Dendritic cell treated with granulocyte-macrophage colony-stimulating factor and Interleukin-4, amounts not matched to agents 40 ng/mL and 50 ng/mL, for 4 days (primary cell): ENCODE measurements at regions of chr2 and their contacts with region 1.

Region 1: GRCh38 chr2:197705121-197705911 is at the start of gene MARS2:
- H3K4me3 Mint-ChIP-seq: peak within 1 kb of the TSS; percentile 88
- H3K27ac Mint-ChIP-seq: peak within 1 kb of the TSS; percentile 84
- H3K4me1 Mint-ChIP-seq: peaks cover 40% of the 10 kb centered on the region
- H3K27me3 Mint-ChIP-seq: peaks cover 4% of the 10 kb centered on the region

Region 2: DNA sequence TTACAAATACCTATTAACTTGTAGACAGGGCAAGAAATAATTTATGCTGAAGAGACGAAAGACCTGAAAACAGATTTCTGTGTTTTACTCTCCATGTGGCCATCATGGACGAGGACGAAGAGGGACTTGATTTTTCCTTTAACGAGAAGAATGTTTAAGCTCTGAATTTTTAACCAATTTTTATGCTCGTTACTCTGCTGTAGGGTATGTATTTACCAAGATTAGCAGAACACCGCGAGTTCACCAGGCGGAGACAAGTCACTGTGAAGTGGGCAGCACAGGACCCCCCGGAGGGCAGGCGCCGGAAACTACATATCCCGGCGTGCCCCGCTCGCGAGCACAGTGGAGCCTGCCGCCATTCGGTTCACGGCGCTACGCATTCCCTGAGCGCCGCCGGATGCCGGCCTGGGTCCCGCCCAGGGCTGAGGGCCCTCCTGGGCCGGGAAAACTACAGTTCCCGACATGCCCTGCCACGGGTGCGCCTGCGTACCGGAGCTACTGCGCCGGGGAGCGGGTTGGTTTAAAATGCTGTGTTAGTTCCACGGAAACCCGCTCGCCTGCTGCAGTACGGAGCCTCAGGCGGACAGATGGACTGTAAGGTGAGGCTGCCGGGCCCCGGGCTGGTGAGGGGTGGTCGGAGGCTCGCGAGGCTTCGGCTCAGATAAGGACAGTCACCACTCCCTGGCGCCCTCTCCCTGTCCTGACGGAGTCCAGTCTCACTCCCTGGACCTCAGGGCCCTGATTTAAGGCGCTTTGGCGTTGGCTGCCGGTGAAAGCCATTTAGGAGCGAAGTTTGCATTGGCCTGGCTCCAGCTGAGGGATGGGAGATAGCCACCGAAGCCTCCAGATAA is 1065.9 kb before region 1 on chr2 and contains the start of gene CCDC150:
- intact Hi-C with region 1: loop called (anchors 10 kb)
- H3K4me3 Mint-ChIP-seq: peak within 1 kb of the TSS; percentile 83
- H3K27ac Mint-ChIP-seq: peak within 1 kb of the TSS; percentile 72
- H3K4me1 Mint-ChIP-seq: peaks cover 13% of the 10 kb centered on the region
- H3K27me3 Mint-ChIP-seq: peaks cover 6% of the 10 kb centered on the region

Region 3: GRCh38 chr2:197069958-197070357 is 635.4 kb before region 1 on chr2:
- intact Hi-C with region 1: no loop called
- H3K4me3 Mint-ChIP-seq: no peak overlapping the region
- H3K27ac Mint-ChIP-seq: no peak overlapping the region
- H3K4me1 Mint-ChIP-seq: peaks cover 12% of the 10 kb centered on the region
- H3K27me3 Mint-ChIP-seq: no peaks in the 10 kb centered on the region

Region 4: DNA sequence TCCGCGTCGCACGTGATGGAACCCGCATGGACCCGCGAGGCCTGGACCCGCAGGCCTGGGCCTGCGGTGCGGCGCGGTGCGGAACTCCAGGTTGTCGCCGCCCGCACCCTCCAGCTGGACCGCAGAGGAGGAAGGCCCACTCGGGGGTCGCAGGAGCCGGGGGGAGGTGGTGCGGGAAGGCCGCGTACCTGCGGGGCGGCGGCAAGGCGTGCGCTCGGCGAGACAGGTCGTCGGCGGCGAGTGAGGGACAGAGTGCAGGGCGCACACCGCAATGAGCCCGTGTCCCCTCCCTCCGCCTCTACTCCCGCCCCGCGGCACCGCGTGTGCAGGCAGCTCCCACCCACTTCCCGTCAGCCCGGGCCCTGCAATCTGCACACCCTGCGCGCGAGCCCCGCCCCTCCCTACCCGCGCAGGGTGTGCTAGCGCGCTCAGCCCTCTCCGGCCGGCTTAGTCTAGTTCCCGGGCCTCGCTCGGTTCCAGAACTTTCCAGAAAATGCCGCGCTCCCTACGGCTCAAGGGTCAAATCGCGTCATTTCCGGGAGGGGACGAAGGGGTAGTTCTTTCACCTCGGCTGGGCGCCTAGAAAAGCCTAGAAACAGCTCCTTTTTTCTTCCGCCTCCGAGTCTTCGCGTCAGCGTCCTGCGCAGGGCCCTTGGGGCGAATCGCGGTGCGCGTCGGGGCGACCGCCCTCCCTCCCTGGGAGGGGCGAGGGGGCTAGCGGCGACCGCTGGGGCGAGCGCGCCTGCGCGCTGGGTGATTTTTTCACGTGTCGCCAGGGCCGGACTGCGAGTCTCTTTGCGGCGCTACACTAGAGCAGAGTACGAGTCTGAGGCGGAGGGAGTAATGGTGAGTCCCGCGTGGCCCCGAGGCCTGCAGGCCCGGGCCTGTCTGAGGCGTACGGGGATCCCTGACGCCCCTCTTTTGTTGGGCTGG is 205.5 kb before region 1 on chr2 and contains the starts of genes HSPD1 and HSPE1:
- intact Hi-C with region 1: loop called (anchors 5 kb)
- H3K4me3 Mint-ChIP-seq: peak within 1 kb of the TSS; percentile 83
- H3K27ac Mint-ChIP-seq: peak within 1 kb of the TSS; percentile 94
- H3K4me1 Mint-ChIP-seq: peaks cover 36% of the 10 kb centered on the region
- H3K27me3 Mint-ChIP-seq: no peaks in the 10 kb centered on the region

Region 5: DNA sequence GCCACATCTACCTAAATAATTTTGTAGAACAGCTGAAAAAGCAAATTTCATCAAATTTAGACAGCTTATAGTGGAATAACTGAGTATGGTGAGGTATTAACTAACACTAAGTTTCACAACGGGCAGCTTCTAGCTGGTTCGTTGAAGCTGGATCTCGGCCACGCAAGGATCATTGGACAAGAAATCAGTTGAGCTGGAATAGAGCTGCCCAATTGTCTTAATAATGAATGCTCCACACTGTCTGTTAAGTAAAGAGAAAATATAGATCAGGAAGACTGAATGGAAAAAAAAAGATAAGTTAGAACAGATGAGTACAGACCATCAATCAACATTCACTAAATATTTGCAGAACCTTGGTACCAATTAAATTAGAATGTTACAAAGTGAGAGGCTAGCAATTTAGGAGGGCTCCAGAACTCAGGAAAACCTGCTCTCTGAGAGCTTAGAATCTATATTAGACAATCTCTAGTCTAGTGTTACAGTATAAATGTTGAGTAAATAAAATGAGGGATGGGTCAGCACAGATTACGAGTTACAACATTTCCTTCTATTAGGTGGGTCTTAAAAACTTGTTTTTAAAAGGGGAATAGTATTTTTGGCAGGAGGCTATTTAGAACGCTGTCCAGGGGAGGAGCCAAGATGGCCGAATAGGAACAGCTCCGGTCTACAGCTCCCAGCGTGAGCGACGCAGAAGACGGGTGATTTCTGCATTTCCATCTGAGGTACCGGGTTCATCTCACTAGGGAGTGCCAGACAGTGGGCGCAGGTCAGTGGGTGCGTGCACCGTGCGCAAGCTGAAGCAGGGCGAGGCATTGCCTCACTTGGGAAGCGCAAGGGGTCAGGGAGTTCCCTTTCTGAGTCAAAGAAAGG is 23.3 kb after region 1 on chr2:
- intact Hi-C with region 1: no loop called
- H3K4me3 Mint-ChIP-seq: no peak overlapping the region
- H3K27ac Mint-ChIP-seq: no peak overlapping the region
- H3K4me1 Mint-ChIP-seq: no peaks in the 10 kb centered on the region
- H3K27me3 Mint-ChIP-seq: no peaks in the 10 kb centered on the region

Region 6: GRCh38 chr2:197777823-197778407 is 72.6 kb after region 1 on chr2:
- intact Hi-C with region 1: loop called (anchors 1 kb)
- H3K4me3 Mint-ChIP-seq: no peak overlapping the region
- H3K27ac Mint-ChIP-seq: no peak overlapping the region
- H3K4me1 Mint-ChIP-seq: peaks cover 6% of the 10 kb centered on the region
- H3K27me3 Mint-ChIP-seq: no peaks in the 10 kb centered on the region

Region 7: GRCh38 chr2:198296665-198297308 is 591.5 kb after region 1 on chr2:
- intact Hi-C with region 1: loop called (anchors 5 kb)
- H3K4me3 Mint-ChIP-seq: no peak overlapping the region
- H3K27ac Mint-ChIP-seq: no peak overlapping the region
- H3K4me1 Mint-ChIP-seq: no peaks in the 10 kb centered on the region
- H3K27me3 Mint-ChIP-seq: peaks cover 4% of the 10 kb centered on the region